Spleen (tissue), 13 donors: ENCODE measurements at regions of chr22 and their contacts with region 1.

Region 1: DNA sequence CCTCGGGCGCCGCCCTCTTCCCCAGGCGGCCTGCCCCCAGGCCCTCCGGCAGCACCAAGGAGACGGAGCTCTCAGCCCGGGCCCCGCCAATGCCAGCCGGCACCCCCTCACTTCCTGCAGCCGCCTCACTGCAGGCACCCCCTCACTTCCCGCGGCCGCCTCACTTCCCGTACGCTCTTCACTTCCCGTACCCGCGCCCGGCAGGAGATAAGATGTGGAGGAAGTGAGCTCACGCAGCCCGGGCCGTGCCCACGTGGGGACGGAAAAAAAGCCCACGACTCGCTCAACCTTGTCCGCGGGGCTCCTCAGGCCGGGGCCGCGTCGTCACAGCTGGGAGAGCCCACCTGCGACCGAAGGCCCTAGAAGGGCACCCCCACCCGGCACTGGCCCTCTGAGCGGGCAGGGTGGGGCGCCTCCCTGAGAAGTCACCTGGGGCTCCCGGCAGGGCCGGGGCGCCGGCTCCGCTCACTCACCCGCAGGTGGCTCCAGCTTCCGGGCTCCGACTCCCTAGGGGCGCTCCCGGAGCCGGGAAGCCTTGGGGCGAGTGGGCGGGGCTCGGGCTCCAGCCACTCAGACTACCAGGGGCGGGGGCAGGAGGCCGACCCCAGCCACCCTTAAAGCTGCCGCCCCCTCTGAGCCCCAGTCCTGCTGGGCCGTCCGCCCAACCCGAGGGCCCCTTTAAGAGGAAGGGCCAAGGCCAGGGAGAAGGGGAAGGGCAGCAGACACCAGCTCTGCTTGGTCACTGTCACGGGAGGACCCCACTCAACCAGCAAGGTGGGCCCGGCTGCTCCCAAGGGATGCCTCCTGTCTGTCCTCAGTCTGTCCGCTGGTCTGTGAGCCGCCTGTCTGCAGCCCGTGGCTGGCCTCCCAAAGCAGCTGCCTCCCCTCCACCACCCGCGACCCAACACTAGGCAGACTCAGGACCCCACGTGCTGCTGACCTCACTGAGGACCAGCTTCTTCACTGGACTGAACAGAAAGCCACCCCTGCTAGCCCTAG is 31.4 kb downstream of the PISD start:
- DNase-seq: peak; percentile 98
- H3K4me3 ChIP-seq: peak overlapping the region; percentile 34 to 78 (median 67)
- H3K27ac ChIP-seq: peak overlapping the region; percentile 86 to 97 (median 94)
- H3K4me1 ChIP-seq: peaks cover 42 to 100% (median 77%) of the 10 kb centered on the region in 6 donors
- H3K27me3 ChIP-seq: no peaks in the 10 kb centered on the region
- CTCF ChIP-seq: peak in 4 of 11 experiments; percentile 8 to 25 (median 19)
- POLR2A ChIP-seq: peak in 1 of 3 donors; percentile 40

Region 2: GRCh38 chr22:31345331-31346254 is 285.0 kb before region 1 on chr22:
- intact Hi-C with region 1: loop called (anchors 10 kb)
- DNase-seq: peak; percentile 96
- H3K4me3 ChIP-seq: peak overlapping the region; percentile 67 to 84 (median 80)
- H3K27ac ChIP-seq: peak overlapping the region; percentile 72 to 96 (median 86)
- H3K4me1 ChIP-seq: peaks cover 40 to 72% (median 65%) of the 10 kb centered on the region in 6 donors
- H3K27me3 ChIP-seq: no peaks in the 10 kb centered on the region
- CTCF ChIP-seq: peak; percentile 75 to 96 (median 88)
- POLR2A ChIP-seq: no peak

Region 3: GRCh38 chr22:31496007-31496734 is 134.5 kb before region 1 on chr22 and contains the start of gene SFI1:
- intact Hi-C with region 1: loop called (anchors 10 kb)
- DNase-seq: peak; percentile 98
- H3K4me3 ChIP-seq: peak within 1 kb of the TSS; percentile 81 to 99 (median 91)
- H3K27ac ChIP-seq: peak within 1 kb of the TSS; percentile 82 to 93 (median 89)
- H3K4me1 ChIP-seq: peaks cover 13 to 92% (median 43%) of the 10 kb centered on the region in 6 donors
- H3K27me3 ChIP-seq: no peaks in the 10 kb centered on the region
- CTCF ChIP-seq: peak in 8 of 11 experiments; percentile 20 to 69 (median 40)
- POLR2A ChIP-seq: peak in 1 of 3 donors; percentile 48
- total RNA-seq, gene SFI1: 78.2 to 110 (median 106) TPM

Region 4: DNA sequence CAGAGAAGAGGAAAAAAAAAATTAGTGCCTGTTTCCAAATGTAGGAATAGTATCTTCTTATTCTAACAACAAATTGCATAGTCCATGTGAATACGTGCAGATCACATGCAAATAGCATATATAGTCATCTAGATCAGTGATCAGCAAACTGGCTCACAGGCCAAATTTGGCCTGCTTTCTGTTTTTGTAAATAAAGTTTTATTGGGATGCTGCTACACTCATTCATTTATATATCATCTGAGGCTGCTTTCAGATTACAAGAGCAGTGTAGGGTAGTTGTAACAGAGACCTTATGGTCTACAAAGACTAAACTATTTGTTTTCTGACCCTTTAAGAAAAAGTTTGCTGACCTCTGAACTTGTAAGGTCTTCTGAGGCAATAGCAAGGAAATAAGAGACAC is 68.7 kb before region 1 on chr22:
- intact Hi-C with region 1: loop called (anchors 2 kb)
- DNase-seq: no peak
- H3K4me3 ChIP-seq: no peak overlapping the region
- H3K27ac ChIP-seq: no peak overlapping the region
- H3K4me1 ChIP-seq: peaks cover 0 to 9% (median 0%) of the 10 kb centered on the region in 6 donors
- H3K27me3 ChIP-seq: no peaks in the 10 kb centered on the region
- CTCF ChIP-seq: no peak
- POLR2A ChIP-seq: no peak